ENCODE measurements at regions of chr11 and their contacts with region 1.

Region 1: GRCh38 chr11:129117595-129118350 is 74.4 kb downstream of the ARHGAP32 start:
- DNase-seq: peak; percentile 77
- H3K4me3 ChIP-seq: no peak overlapping the region
- H3K27ac ChIP-seq: no peak overlapping the region
- H3K4me1 ChIP-seq: peaks cover 16% of the 10 kb centered on the region
- H3K27me3 ChIP-seq: no peaks in the 10 kb centered on the region

Region 2: GRCh38 chr11:129048911-129049310 is 68.9 kb before region 1 on chr11:
- in situ Hi-C with region 1: no loop called
- DNase-seq: no peak
- H3K4me3 ChIP-seq: no peak overlapping the region
- H3K27ac ChIP-seq: no peak overlapping the region
- H3K4me1 ChIP-seq: no peaks in the 10 kb centered on the region
- H3K27me3 ChIP-seq: no peaks in the 10 kb centered on the region

Region 3: DNA sequence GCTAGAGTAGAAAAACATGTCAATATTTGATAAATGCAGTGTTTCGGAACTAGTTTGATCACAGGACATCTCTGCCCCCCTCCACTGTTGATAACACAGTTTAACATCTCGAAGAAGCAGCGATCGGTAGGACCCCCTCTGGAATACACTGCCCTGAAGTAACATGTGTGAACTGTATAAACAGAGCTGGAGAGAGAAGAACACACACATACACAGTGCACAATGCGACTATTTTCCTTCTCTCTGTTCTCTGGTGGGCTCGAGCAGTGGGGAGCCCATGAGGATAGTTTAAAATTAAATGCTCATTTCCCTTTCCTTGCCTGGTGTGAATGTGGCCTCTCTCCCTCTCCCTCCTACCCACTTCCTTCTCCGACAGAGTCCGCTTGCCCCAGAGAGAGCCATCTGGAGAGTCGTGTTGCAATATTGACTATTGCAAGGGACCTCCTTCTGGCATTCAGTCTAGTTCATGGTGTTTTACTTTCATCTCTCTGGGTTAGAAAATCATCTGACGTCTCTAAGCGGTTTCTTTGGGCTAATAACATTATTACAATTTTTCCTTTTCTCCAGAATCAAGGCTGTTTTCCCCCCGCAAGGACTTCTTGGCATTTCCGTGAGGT is 206.2 kb after region 1 on chr11:
- in situ Hi-C with region 1: loop called (anchors 10 kb)
- DNase-seq: peak; percentile 61
- H3K4me3 ChIP-seq: peak overlapping the region; percentile 48
- H3K27ac ChIP-seq: no peak overlapping the region
- H3K4me1 ChIP-seq: peaks cover 10% of the 10 kb centered on the region
- H3K27me3 ChIP-seq: no peaks in the 10 kb centered on the region

Region 4: DNA sequence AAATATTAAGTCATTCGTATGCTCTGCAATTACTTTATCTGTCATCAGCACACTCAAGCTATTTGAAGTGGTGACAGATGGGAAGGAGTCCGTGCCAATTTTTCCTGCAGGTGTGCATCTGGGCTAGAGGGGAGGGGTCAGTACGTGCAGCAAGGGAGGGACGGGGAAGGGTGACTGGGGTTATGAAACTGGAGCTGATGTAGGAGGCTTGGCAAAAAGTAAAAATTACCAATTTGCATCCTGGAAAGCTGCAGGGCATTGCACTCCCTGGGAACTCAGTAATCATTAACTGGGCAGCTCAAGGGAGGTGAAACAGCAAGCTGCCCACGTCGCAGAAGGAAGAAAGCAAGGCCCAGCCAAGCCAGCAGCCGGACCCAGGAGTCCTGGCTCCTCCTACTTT is 610.8 kb after region 1 on chr11:
- in situ Hi-C with region 1: loop called (anchors 25 kb)
- DNase-seq: no peak
- H3K4me3 ChIP-seq: no peak overlapping the region
- H3K27ac ChIP-seq: no peak overlapping the region
- H3K4me1 ChIP-seq: no peaks in the 10 kb centered on the region
- H3K27me3 ChIP-seq: peaks cover 67% of the 10 kb centered on the region

Measured in GM23248 (cell line).